Lower leg skin (tissue), 4 donors: ENCODE measurements at regions of chr20 and their contacts with region 1.

Region 1: GRCh38 chr20:20353576-20353975 is 14.3 kb upstream of the INSM1 start:
- DNase-seq: no peak
- H3K4me3 ChIP-seq: no peak overlapping the region
- CTCF ChIP-seq: no peak
- POLR2A ChIP-seq: no peak

Region 2: DNA sequence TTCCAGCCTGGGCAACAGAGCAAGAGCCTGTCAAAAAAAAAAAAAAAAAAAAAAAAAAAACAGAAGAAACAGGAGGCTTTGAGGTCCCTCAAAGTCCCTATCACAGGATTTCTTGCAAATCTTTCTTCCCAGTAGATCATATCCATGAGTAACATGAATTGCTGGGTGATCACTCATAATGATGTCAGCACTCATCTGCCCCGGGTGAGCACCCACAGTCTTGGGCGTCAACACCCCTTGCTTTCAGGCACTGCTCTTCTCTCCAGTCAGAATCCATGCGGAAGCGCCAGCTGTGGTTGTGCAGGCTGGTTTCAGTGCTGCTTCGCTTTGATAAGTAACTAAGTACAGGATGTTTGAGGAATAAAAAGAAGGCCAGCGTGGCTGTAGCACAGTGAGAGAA is 25.8 kb before region 1 on chr20:
- intact Hi-C with region 1: loop called (anchors 1 kb)
- DNase-seq: no peak
- H3K4me3 ChIP-seq: no peak overlapping the region
- CTCF ChIP-seq: no peak
- POLR2A ChIP-seq: no peak